Tibial artery (tissue), 4 donors: ENCODE measurements at regions of chr4 and their contacts with region 1.

Region 1: DNA sequence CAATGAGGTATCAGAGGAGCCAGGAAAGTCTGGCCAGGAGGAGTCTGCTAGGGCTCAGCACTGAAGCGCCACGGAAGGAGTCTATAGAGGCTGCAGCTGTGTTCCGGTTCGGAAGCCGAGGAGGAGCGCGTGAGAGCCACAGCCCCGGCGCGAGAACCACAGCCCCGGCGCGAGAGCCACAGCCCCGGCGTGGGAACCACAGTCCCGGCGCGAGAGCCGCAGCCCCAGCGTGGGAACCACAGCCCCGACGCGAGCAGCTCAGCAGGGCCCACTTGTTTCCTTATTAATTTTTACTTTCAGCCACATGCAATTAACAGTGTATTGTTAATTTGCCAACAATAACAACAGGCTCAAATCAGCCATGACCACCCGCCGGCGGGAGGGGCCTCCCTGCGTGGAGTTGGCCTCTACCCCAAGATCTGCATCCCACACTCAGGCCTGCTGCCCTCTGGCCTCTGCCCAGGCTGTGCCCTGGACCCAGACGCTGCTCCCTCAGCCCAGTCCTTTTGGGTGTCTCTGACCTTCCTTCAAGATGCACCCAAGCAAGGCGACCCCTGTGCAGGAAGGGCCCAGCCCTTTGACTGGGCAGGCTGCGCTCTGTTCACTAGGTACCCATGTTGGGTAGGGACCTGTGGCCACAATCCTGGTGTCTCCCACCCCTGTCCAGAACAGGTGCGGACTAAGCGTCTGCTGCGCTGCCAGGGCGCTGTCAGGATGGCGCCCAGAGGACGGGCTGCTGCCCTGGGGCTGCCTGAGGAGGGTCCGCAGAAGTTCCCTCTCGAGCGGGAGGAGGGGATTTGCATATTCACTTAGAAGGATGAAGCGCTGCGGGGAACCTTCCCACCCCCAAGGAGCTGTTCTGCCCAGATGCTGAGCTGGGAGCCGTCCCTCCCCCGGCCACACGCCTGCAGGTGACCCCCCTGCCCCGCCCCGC is 113.8 kb downstream of the ADRA2C start:
- DNase-seq: peak in 1 of 2 donors; percentile 56
- H3K4me3 ChIP-seq: no peak overlapping the region
- H3K27ac ChIP-seq: no peak overlapping the region
- H3K4me1 ChIP-seq: peaks cover 0 to 13% (median 8%) of the 10 kb centered on the region in 4 donors
- H3K27me3 ChIP-seq: peaks cover 0 to 64% of the 10 kb centered on the region in 2 donors
- CTCF ChIP-seq: no peak

Region 2: GRCh38 chr4:2689825-2690700 is 1189.9 kb before region 1 on chr4:
- intact Hi-C with region 1: no loop called
- DNase-seq: peak; percentile 40 to 75
- H3K4me3 ChIP-seq: no peak overlapping the region
- H3K27ac ChIP-seq: no peak overlapping the region
- H3K4me1 ChIP-seq: peaks cover 0 to 10% (median 8%) of the 10 kb centered on the region in 4 donors
- H3K27me3 ChIP-seq: no peaks in the 10 kb centered on the region
- CTCF ChIP-seq: no peak

Region 3: DNA sequence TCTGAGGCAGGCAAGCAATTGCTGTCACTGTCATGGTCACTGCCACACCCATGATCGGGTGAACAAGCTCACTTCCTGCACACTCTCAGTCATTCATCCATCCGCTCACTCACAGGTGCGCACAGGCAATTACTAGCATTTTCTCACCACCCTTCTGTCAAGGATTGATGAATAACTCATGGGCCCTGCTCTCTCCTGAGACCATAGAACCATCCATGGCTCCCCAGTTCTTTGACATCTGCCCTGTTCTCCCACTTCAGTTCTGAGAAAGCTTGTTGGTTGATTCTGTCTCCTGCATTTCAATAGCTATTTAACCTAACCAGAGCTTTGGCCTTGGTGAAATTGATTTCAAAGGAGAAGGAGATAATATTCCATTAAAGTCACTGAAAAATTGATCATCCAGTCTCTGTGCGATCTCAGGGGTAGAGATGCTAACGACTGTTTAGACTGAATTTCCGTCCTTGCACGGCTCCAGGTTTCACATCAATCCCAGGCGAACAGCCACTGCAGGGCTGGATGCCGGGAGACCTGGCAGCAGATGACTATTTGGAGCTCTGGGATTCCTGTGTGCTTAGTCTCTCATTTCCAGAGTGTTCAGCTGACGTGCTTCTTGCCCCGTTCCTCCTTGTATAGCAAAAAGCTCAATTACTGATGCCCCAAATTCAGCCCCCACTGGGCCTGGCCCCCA is 150.6 kb before region 1 on chr4:
- intact Hi-C with region 1: no loop called
- DNase-seq: peak; percentile 55 to 86
- H3K4me3 ChIP-seq: no peak overlapping the region
- H3K27ac ChIP-seq: peak overlapping the region; percentile 77 to 88
- H3K4me1 ChIP-seq: peaks cover 0 to 53% (median 19%) of the 10 kb centered on the region in 4 donors
- H3K27me3 ChIP-seq: peaks cover 0 to 22% of the 10 kb centered on the region in 2 donors
- CTCF ChIP-seq: no peak

Region 4: DNA sequence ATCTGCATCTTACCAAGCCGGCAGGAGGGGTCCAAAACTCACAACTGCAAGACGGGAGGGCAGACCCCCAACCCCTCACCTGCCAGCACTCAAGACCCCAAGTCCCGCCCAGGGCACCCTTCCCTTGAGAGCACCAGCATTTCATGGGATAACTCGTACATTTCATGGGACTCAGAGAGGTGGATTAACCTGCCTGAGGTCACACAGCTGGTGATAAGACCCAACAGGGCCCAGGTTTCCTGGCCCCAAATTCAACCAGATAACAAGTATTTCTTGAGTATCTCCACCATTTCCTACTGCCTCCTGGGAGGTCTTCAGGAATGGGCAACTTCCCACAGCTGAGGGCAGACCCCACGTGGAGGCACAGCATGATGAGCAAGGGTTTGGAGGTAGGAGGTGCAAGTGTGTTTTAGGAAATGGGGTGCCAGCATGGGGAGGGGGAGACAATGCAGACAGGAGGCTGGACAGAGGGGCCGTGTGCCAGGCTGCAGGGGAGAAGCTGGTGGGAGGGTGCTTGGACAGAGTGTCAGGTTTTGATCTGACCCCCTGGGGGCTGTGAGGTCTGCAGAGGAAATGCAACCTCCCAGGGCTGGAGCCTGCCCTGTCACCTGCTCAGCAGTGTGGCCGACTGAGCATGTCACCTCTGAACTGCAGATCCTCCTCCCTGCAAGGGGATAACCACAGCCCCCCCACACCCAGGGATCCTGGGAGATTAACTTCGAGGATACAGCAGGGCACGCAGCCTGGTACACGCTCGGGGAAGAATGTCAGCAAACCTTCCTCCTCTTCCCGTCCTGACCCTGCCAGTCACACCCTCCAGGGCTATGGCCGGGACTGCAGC is 109.4 kb before region 1 on chr4:
- intact Hi-C with region 1: loop called (anchors 2 kb)
- DNase-seq: no peak
- H3K4me3 ChIP-seq: no peak overlapping the region
- H3K27ac ChIP-seq: peak overlapping the region; percentile 68 to 73
- H3K4me1 ChIP-seq: peaks cover 6 to 61% (median 29%) of the 10 kb centered on the region in 4 donors
- H3K27me3 ChIP-seq: peaks cover 0 to 13% of the 10 kb centered on the region in 2 donors
- CTCF ChIP-seq: no peak